CD8-positive, alpha-beta T cell (primary cell): ENCODE measurements at regions of chr2 and their contacts with region 1.

Region 1: GRCh38 chr2:185510060-185510459 is 228.5 kb upstream of the FSIP2 start:
- DNase-seq: no peak
- ATAC-seq: no peak
- H3K4me3 ChIP-seq: no peak overlapping the region
- H3K4me3 Mint-ChIP-seq: no peak overlapping the region
- H3K27ac ChIP-seq: no peak overlapping the region
- H3K27ac Mint-ChIP-seq: no peak overlapping the region
- H3K4me1 ChIP-seq: no peaks in the 10 kb centered on the region
- H3K4me1 Mint-ChIP-seq: no peaks in the 10 kb centered on the region
- H3K27me3 ChIP-seq: no peaks in the 10 kb centered on the region
- H3K27me3 Mint-ChIP-seq: no peaks in the 10 kb centered on the region
- CTCF ChIP-seq: no peak

Region 2: GRCh38 chr2:183729380-183729779 is 1780.7 kb before region 1 on chr2:
- CTCF ChIA-PET with region 1: no interaction called
- POLR2A ChIA-PET with region 1: no interaction called
- intact Hi-C with region 1: loop called in 1 of 2 experiments (anchors 5 kb)
- DNase-seq: no peak
- ATAC-seq: no peak
- H3K4me3 ChIP-seq: no peak overlapping the region
- H3K4me3 Mint-ChIP-seq: no peak overlapping the region
- H3K27ac ChIP-seq: no peak overlapping the region
- H3K27ac Mint-ChIP-seq: no peak overlapping the region
- H3K4me1 ChIP-seq: no peaks in the 10 kb centered on the region
- H3K4me1 Mint-ChIP-seq: no peaks in the 10 kb centered on the region
- H3K27me3 ChIP-seq: no peaks in the 10 kb centered on the region
- H3K27me3 Mint-ChIP-seq: no peaks in the 10 kb centered on the region
- CTCF ChIP-seq: no peak

Region 3: GRCh38 chr2:185404578-185404977 is 105.5 kb before region 1 on chr2:
- CTCF ChIA-PET with region 1: no interaction called
- POLR2A ChIA-PET with region 1: no interaction called
- intact Hi-C with region 1: no loop called
- DNase-seq: no peak
- ATAC-seq: no peak
- H3K4me3 ChIP-seq: no peak overlapping the region
- H3K4me3 Mint-ChIP-seq: no peak overlapping the region
- H3K27ac ChIP-seq: no peak overlapping the region
- H3K27ac Mint-ChIP-seq: no peak overlapping the region
- H3K4me1 ChIP-seq: no peaks in the 10 kb centered on the region
- H3K4me1 Mint-ChIP-seq: no peaks in the 10 kb centered on the region
- H3K27me3 ChIP-seq: no peaks in the 10 kb centered on the region
- H3K27me3 Mint-ChIP-seq: no peaks in the 10 kb centered on the region
- CTCF ChIP-seq: no peak

Region 4: DNA sequence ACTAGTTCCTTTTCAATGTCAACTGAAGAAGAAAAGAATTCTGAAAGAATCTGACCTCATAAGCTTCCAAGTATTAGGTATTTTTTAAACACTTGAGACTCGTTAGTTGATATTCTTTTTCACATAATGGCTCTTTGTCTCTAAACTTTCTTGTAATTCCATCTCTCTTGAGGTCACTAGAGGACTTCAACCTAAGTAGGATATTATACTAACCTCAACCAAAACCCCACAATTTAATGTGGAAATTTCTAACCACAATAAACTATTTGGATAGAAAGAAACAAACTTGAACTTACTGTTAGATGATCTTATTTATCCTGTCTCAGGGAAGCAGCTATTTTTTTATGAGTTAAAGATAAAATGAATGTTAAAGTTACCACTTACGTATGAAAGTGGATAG is 21.7 kb after region 1 on chr2:
- CTCF ChIA-PET with region 1: no interaction called
- POLR2A ChIA-PET with region 1: no interaction called
- intact Hi-C with region 1: no loop called
- DNase-seq: no peak
- ATAC-seq: no peak
- H3K4me3 ChIP-seq: no peak overlapping the region
- H3K4me3 Mint-ChIP-seq: no peak overlapping the region
- H3K27ac ChIP-seq: no peak overlapping the region
- H3K27ac Mint-ChIP-seq: no peak overlapping the region
- H3K4me1 ChIP-seq: no peaks in the 10 kb centered on the region
- H3K4me1 Mint-ChIP-seq: no peaks in the 10 kb centered on the region
- H3K27me3 ChIP-seq: no peaks in the 10 kb centered on the region
- H3K27me3 Mint-ChIP-seq: no peaks in the 10 kb centered on the region
- CTCF ChIP-seq: no peak